Activated T-helper 1 cell treated with anti-CD3 and anti-CD28 coated beads, Interleukin-12 subunit alpha, Interleukin-12 subunit beta, Interleukin-2, Interleukin-4 antibody, amounts not matched to agents 30 ng/mL and 10 ng/mL and 1 ng/mL, durations not matched to agents 14 hours and 24 hours and 36 hours (primary cell): ENCODE measurements at regions of chr10 and their contacts with region 1.

Region 1: DNA sequence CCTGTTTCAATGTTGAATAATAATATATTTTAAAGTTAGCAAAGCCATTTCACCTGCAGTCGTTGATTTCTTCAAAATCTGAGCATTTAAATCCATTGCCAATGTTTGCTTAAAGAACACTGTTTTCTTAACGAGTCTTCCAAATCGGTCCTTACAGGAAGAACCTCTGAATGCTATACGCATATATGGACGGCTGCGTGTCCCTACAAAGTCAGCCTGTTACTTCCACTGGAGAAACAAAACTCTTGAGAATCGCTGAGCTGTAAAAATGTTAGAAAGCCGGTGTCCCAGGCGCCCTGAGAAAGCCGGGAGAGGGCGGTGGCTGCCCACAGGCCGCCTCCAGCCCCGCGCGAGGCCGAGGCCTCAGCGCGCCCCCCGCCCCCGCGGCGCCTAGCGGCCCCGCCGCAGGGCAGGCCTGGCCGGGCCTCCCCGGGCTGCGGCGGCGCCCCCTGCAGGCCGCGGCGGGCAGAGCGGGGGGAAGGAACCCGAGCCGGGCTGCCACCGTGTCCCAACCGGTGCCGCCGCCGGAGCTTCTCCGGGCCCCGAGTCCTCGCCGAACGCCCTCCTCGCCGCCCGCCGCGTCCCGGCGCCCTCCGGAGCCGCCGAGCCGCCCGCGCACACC is at the start of gene FHIP2A:
- DNase-seq: peak; percentile 82
- H3K4me3 Mint-ChIP-seq: peak within 1 kb of the TSS; percentile 94
- H3K27ac Mint-ChIP-seq: peak within 1 kb of the TSS; percentile 93
- H3K4me1 Mint-ChIP-seq: peaks cover 33% of the 10 kb centered on the region
- H3K27me3 Mint-ChIP-seq: peaks cover 8% of the 10 kb centered on the region
- total RNA-seq, gene FHIP2A: 25.0 and 29.0 TPM in 2 replicates

Region 2: GRCh38 chr10:112969542-112969941 is 1851.9 kb before region 1 on chr10:
- intact Hi-C with region 1: no loop called
- DNase-seq: no peak
- H3K4me3 Mint-ChIP-seq: no peak overlapping the region
- H3K27ac Mint-ChIP-seq: no peak overlapping the region
- H3K4me1 Mint-ChIP-seq: no peaks in the 10 kb centered on the region
- H3K27me3 Mint-ChIP-seq: peaks cover 37% of the 10 kb centered on the region

Region 3: DNA sequence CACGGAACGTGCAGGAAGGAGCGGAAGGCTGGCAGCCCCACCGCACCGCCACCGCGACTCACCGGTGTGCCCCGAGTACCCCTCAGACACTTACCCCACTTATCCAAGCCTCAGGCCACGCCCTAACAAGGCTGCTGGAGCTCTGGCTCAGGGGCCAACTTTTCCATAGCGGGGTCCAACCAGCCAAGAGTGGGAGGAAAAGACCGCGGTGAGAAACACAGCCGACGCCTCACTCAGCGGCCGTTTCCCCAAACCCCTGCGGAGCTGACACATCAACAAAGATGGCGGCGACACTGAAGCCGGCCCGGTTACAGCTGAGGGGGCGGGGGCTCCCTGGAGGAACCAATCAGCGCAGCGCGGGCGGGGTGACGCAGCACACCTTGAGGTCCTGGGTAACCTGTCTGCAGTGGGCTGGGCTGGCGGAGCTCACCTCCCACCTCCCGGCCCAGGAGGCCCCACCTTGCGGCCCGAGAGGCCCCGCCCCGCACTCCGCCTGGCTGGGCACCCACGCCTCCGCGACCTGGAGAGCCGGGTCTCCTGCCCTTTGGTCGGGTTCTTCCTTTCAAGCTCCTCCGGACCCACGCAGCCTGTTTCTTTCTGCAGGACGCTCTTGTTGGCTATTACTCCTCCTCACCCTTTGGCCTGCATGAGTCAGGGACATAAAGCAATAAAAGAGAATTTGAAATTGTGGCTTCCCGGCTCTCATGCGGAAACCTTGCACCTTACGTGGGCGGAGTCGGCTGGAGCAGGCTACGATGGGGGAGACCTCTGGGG is 647.3 kb before region 1 on chr10 and contains the start of gene CCDC186:
- intact Hi-C with region 1: loop called (anchors 1 kb)
- DNase-seq: peak; percentile 96
- H3K4me3 Mint-ChIP-seq: peak within 1 kb of the TSS; percentile 95
- H3K27ac Mint-ChIP-seq: peak within 1 kb of the TSS; percentile 91
- H3K4me1 Mint-ChIP-seq: peaks cover 35% of the 10 kb centered on the region
- H3K27me3 Mint-ChIP-seq: peaks cover 12% of the 10 kb centered on the region
- total RNA-seq, gene CCDC186: 12.1 and 13.0 TPM in 2 replicates

Region 4: DNA sequence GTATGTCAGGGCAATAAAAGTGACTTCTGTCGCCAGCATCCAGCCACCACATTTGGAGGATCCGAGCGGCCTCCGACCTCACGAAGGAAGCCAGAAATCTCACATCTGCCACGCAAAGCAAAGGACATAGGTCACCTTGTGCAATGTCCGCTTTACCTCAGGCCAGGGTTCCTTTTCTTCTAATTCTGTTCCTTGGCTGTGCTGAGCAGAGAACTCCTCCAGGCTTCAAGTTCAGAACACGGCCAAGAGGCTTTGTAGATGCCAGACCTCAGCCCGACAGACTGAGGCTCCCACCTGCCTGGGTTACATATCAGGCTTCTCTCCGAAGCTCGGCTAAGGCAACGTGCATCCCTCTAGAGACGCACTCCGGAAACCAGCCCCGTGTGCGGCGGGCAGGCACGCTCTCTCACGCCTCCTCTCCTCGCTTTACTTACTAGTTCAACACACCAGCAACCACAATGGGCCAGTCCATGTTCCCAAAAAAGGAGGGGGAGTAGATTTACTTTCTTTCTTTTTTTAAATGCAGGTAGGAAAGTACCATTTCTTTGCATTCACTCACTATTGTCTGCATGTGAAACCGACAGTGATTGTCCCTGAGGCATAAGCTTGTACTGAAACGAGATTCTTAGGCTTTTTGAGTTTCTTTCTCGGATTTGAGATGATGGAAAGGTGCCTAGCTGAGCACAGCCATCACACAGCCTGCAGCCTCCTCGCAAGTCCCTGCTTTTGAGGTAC is 294.7 kb before region 1 on chr10:
- intact Hi-C with region 1: loop called (anchors 1 kb)
- DNase-seq: peak; percentile 82
- H3K4me3 Mint-ChIP-seq: peak overlapping the region; percentile 87
- H3K27ac Mint-ChIP-seq: peak overlapping the region; percentile 92
- H3K4me1 Mint-ChIP-seq: peaks cover 58% of the 10 kb centered on the region
- H3K27me3 Mint-ChIP-seq: peaks cover 2% of the 10 kb centered on the region

Region 5: DNA sequence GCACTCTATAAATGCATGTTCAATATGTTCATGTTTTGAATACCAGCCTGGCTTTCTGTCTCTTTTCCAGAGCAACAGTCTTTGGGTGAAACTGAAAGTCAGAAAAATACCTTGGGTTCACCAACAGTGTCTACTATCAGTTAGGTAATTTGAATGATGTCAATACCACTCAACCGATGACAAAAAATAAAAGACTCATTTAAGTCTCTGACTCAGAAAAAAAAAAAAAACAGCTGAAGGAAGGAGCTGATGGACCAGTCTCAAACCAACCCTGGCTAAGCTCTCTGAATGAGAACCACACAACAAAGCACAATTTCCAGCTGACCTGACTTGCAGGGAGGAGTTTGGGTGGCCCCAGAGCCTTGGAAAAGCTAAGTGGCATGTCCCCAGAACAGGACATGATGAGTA is 205.8 kb before region 1 on chr10:
- intact Hi-C with region 1: loop called (anchors 5 kb)
- DNase-seq: no peak
- H3K4me3 Mint-ChIP-seq: peak overlapping the region; percentile 11
- H3K27ac Mint-ChIP-seq: peak overlapping the region; percentile 36
- H3K4me1 Mint-ChIP-seq: peaks cover 22% of the 10 kb centered on the region
- H3K27me3 Mint-ChIP-seq: peaks cover 9% of the 10 kb centered on the region

Region 6: GRCh38 chr10:114801411-114801813 is 20.0 kb before region 1 on chr10:
- intact Hi-C with region 1: loop called (anchors 1 kb)
- DNase-seq: peak; percentile 43
- H3K4me3 Mint-ChIP-seq: peak overlapping the region; percentile 77
- H3K27ac Mint-ChIP-seq: peak overlapping the region; percentile 79
- H3K4me1 Mint-ChIP-seq: peaks cover 47% of the 10 kb centered on the region
- H3K27me3 Mint-ChIP-seq: no peaks in the 10 kb centered on the region

Region 7: DNA sequence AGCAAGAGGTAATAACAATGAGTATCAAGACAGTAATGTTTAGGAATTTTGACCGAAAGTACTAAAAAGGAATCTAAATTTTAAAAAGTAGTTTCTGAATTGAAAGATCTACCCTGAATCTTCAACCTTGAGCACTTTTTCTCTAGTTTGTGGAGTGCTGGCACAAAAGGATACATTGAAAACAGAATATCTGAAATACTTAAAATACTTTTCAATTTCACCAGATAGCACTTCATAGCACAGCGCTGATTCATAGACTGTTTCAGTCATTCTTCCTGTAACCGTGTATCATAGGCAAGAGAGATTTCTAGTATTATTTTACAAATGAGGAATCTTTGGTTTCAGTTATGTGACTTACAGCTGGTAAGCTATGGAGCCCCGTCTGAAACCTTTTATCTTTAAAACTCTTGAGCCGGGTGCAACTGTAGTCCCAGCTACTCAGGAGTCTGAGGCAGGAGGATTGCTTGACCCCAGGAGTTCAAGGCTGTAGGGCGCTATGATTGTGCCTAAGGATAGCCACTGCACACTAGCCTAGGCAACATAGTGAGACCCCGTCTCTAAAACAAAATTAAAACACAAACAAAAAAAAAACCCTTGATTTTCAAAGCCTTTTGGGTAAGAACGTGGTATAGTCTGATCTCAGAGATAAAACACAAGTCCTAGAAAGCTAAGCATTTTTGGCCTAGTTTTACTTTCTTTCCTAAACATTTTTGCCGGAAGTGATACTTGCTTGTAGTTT is 35.3 kb after region 1 on chr10:
- intact Hi-C with region 1: loop called (anchors 5 kb)
- DNase-seq: no peak
- H3K4me3 Mint-ChIP-seq: peak overlapping the region; percentile 28
- H3K27ac Mint-ChIP-seq: peak overlapping the region; percentile 73
- H3K4me1 Mint-ChIP-seq: peaks cover 36% of the 10 kb centered on the region
- H3K27me3 Mint-ChIP-seq: no peaks in the 10 kb centered on the region

Region 8: GRCh38 chr10:114937962-114938855 is 116.8 kb after region 1 on chr10 and contains the start of gene TRUB1:
- intact Hi-C with region 1: loop called (anchors 1 kb)
- DNase-seq: peak; percentile 83
- H3K4me3 Mint-ChIP-seq: peak within 1 kb of the TSS; percentile 99
- H3K27ac Mint-ChIP-seq: peak within 1 kb of the TSS; percentile 84
- H3K4me1 Mint-ChIP-seq: peaks cover 35% of the 10 kb centered on the region
- H3K27me3 Mint-ChIP-seq: no peaks in the 10 kb centered on the region
- total RNA-seq, gene TRUB1: 21.6 TPM in 2 replicates